PC-9 (cell line): ENCODE measurements at regions of chr19 and their contacts with region 1.

Region 1: DNA sequence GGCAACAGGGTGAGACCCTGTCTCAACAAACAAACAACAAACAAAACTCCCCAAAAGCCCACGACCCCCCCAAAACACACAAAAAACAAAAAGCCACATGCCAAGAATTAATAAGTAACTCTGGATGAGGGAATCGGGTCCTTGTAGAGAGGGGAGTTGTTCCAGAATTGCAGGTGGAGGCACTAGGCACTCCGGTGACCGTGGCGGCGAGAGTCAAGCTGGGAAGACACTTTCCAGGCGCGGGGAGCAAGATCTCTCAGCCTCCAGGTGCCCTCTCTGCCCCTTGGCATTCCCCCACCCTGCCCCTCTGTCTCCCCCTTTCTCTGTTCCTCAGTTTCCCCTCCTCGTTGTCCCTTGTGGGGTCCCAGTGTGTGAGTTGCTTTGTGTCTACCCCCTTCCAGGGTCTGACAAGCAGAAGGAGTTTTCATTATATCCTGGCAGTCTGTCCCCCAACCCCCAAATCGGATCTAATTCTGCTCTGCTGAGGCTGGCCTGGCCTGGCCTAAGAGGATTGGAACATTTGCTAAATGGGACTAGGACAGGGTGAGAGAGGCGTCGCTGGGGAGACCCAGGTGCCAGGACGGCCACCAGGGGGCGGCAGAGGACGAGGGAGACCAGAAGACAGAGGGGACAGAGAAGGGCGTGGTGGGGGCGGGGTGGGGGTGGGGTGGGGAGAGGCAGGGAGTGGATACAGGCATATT is 8.3 kb upstream of the CRX start:
- DNase-seq: peak; percentile 49 to 78
- H3K4me3 ChIP-seq: no peak overlapping the region
- H3K27ac ChIP-seq: no peak overlapping the region
- H3K4me1 ChIP-seq: no peaks in the 10 kb centered on the region
- H3K27me3 ChIP-seq: peaks cover 16% of the 10 kb centered on the region
- CTCF ChIP-seq: peak; percentile 78

Region 2: GRCh38 chr19:47414469-47414868 is 399.0 kb before region 1 on chr19:
- CTCF ChIA-PET with region 1: no interaction called
- POLR2A ChIA-PET with region 1: no interaction called
- intact Hi-C with region 1: no loop called
- DNase-seq: peak in 1 of 2 experiments; percentile 47
- H3K4me3 ChIP-seq: no peak overlapping the region
- H3K27ac ChIP-seq: no peak overlapping the region
- H3K4me1 ChIP-seq: no peaks in the 10 kb centered on the region
- H3K27me3 ChIP-seq: peaks cover 88% of the 10 kb centered on the region
- CTCF ChIP-seq: peak; percentile 69

Region 3: DNA sequence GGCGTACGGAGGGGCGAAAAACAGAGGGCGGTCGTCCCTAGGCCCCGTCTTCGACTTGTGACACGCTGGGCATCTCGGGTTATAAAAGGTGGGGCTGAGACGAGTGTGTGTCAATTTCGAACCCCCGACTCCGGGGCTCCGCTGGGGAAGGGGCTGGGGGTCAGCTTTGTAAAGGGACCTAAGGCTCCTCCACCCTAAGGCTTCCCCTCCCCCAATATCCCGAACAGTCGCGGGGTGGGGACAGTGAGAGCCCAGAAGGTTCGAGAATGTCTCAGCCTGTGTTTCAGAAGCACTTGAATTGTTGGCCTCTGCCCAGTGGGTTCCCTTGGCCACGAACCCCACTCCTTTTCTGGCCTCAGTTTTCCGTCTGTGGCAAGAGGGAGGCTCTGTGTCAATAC is 34.5 kb before region 1 on chr19:
- CTCF ChIA-PET with region 1: no interaction called
- POLR2A ChIA-PET with region 1: interaction called, 10 read pairs
- intact Hi-C with region 1: no loop called
- DNase-seq: no peak
- H3K4me3 ChIP-seq: peak overlapping the region; percentile 95
- H3K27ac ChIP-seq: 0 out of 2 replicates have a peak overlapping the region, but pooled peaks have one; percentile 84
- H3K4me1 ChIP-seq: peaks cover 24% of the 10 kb centered on the region
- H3K27me3 ChIP-seq: no peaks in the 10 kb centered on the region
- CTCF ChIP-seq: no peak

Region 4: DNA sequence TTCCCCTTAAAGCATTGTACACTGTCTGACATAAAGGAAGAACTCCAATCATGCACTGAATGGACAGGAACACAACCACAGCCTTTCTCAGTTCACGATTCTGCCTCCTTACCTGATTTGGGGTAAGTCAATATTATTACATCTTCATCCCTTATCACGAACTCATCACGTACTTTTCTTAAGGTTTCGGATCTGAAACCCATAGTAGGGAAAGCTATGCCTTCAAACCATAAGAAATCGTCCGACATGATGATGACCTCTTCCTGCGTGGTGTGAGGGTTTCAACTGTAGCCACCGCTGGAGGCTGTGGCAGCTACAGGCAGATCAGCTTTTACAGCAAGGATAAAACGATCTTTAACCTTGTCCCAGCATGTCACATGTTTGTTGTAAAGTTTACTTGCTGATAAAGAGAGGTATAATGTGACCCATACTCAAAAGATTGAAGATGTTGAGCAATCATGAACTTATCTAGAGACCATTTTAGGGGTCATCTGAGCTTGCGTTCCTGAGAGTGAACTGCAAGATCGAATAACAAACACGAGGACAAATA is 72.6 kb after region 1 on chr19 and contains the start of gene SULT2A1:
- CTCF ChIA-PET with region 1: no interaction called
- POLR2A ChIA-PET with region 1: interaction called, 10 read pairs
- intact Hi-C with region 1: no loop called
- DNase-seq: no peak
- H3K4me3 ChIP-seq: no peak within 1 kb of the TSS
- H3K27ac ChIP-seq: no peak within 1 kb of the TSS
- H3K4me1 ChIP-seq: no peaks in the 10 kb centered on the region
- H3K27me3 ChIP-seq: peaks cover 80% of the 10 kb centered on the region
- CTCF ChIP-seq: no peak
- total RNA-seq, gene SULT2A1: not detected in 2 replicates